Stomach (tissue), 19 donors: ENCODE measurements at regions of chr5 and their contacts with region 1.

Region 1: DNA sequence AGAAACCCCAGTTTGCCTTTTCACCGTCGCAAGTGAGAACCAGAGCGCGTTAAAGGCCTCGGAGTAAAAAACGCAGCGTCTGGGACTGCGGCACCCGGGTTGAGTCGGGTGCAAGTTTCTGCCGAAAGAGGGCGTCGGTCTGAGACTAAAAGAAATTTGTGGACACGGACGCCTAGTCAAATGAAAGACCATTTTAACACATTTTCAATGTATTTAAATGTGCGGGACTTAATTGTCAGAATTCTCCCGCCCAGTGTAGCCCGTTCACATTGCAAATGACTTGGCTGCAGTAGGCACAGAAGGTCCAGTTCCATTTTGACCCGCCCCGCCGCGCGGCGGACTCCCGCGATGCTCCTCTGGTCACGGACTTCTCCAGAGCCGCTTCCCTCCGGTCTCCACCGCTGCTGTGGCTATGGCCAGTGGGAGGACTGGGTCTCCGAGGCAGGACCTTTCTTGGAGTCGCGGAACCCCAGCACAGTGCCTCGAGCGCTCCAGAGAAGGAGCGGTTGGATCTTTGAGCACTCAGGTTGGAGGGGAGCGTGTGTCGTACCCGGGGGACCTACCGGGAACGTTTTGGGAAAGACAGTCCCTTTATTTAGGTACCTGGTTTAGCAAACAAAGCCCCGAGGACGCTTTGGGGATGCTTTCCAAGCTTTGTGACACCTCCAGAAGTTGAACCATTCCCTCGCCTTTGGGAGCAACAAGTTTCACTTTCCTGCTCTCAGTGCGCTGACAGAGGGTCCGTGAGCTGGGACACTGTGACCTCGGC is 1.2 kb upstream of the NPR3 start:
- DNase-seq: peak; percentile 47 to 91
- H3K4me3 ChIP-seq: peak overlapping the region; percentile 49 to 82 (median 67)
- H3K27ac ChIP-seq: peak overlapping the region; percentile 14 to 42 (median 35)
- H3K4me1 ChIP-seq: peaks cover 19 to 52% (median 41%) of the 10 kb centered on the region in 4 donors
- H3K27me3 ChIP-seq: peaks cover 4 to 63% (median 39%) of the 10 kb centered on the region in 3 donors
- CTCF ChIP-seq: peak in 4 of 7 experiments; percentile 30 to 61 (median 52)
- EP300 ChIP-seq: no peak
- POLR2A ChIP-seq: no peak

Region 2: GRCh38 chr5:32589942-32590869 is 119.8 kb before region 1 on chr5:
- intact Hi-C with region 1: no loop called
- DNase-seq: peak in 1 of 2 donors; percentile 80
- H3K4me3 ChIP-seq: no peak overlapping the region
- H3K27ac ChIP-seq: no peak overlapping the region
- H3K4me1 ChIP-seq: peaks cover 7 to 72% (median 35%) of the 10 kb centered on the region in 4 donors
- H3K27me3 ChIP-seq: no peaks in the 10 kb centered on the region
- CTCF ChIP-seq: peak in 5 of 7 experiments; percentile 40 to 85 (median 72)
- EP300 ChIP-seq: no peak
- POLR2A ChIP-seq: no peak

Region 3: GRCh38 chr5:32865475-32865874 is 155.5 kb after region 1 on chr5:
- intact Hi-C with region 1: no loop called
- DNase-seq: no peak
- H3K4me3 ChIP-seq: no peak overlapping the region
- H3K27ac ChIP-seq: no peak overlapping the region
- H3K4me1 ChIP-seq: no peaks in the 10 kb centered on the region
- H3K27me3 ChIP-seq: no peaks in the 10 kb centered on the region
- CTCF ChIP-seq: no peak
- EP300 ChIP-seq: no peak
- POLR2A ChIP-seq: no peak

Region 4: DNA sequence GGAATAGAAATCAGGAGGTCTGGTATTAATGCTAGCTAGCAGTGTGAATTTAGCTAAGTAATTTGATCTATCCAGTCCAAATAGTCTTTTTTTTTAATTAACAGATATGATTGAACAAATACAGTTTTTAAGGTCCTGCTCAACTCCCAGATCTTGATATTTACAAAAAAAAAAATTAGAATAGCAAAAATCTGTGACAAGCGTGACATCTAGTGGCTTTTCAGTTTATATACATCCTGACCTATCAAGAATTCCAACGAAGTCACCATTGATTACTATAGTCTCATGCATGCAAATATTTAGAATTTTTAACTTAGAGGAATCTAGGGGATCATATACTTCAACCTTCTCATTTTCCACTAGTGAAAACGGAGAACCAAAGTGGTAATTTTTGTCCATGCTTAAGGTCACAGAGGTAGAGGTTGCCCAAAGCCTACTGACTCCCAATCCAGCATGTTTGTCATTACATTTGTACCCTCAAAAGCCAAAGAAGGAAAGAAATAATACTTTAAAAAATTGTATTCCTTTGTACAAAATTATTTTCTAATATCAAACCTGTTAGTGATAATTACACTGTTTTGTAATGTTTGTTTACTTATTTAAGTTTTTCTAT is 713.2 kb after region 1 on chr5:
- intact Hi-C with region 1: loop called (anchors 10 kb)
- DNase-seq: peak in 1 of 2 donors; percentile 61
- H3K4me3 ChIP-seq: no peak overlapping the region
- H3K27ac ChIP-seq: no peak overlapping the region
- H3K4me1 ChIP-seq: no peaks in the 10 kb centered on the region
- H3K27me3 ChIP-seq: peaks cover 0 to 8% (median 0%) of the 10 kb centered on the region in 3 donors
- CTCF ChIP-seq: peak in 4 of 7 experiments; percentile 12 to 38 (median 19)
- EP300 ChIP-seq: no peak
- POLR2A ChIP-seq: no peak